GM18951 (cell line): ENCODE measurements at regions of chr17 and their contacts with region 1.

Region 1: GRCh38 chr17:79796763-79797491 is at the start of gene CBX8:
- POLR2A ChIP-seq: peak; percentile 63

Region 2: GRCh38 chr17:79970576-79971068 is 173.7 kb after region 1 on chr17:
- in situ Hi-C with region 1: loop called (anchors 25 kb)
- POLR2A ChIP-seq: no peak